Ascending aorta (tissue), 2 donors: ENCODE measurements at regions of chr11 and their contacts with region 1.

Region 1: GRCh38 chr11:113730887-113731726 is 25.0 kb upstream of the TMPRSS5 start:
- DNase-seq: peak in 1 of 2 donors; percentile 69
- H3K4me3 ChIP-seq: no peak overlapping the region
- H3K27ac ChIP-seq: no peak overlapping the region
- H3K4me1 ChIP-seq: no peaks in the 10 kb centered on the region
- H3K27me3 ChIP-seq: no peaks in the 10 kb centered on the region
- CTCF ChIP-seq: peak; percentile 30 to 75 (median 71)

Region 2: DNA sequence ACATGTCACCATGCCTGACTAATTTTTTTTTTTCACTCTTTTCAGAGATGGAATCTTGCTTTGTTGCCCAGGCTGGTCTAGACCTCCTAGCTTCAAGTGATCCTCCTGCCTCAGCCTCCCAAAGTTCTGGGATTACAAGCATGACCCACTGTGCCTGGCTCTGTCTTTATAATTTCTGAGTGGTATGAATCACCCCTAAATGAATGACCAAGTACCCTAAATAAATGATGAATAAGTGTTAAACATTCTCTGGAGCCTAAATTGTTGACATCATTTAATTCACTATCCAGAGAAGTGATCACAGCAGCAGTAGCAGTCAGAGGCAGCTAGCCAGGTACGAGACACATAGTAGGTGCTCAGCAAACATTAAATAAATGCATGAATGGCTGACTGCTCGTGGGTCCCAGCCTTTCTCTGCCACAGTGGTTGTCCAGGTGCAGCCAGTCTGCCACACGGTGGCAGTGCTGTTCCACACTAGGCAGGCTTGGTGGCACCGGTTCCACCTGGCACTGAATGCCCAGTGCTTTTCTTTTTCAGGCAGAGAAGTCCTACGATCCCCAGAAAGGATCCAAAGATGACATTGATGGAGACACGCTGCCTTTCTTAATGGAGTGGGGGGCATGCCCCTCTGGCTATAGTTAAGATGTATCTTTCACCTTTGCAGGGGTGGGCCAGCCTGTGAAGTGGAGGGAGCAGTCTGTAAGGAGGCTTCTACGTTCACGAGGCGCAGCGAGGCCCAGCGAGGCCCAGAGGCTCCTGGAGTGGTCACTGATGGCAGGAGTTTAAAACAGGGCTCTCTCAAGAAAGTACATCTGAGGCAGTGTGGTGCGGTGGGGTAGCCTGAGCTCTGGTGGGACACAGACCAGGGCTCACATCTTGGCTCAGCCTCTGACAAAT is 425.4 kb before region 1 on chr11:
- intact Hi-C with region 1: loop called (anchors 1 kb)
- DNase-seq: peak in 1 of 2 donors; percentile 81
- H3K4me3 ChIP-seq: no peak overlapping the region
- H3K27ac ChIP-seq: no peak overlapping the region
- H3K4me1 ChIP-seq: peaks cover 0 to 2% of the 10 kb centered on the region in 2 donors
- H3K27me3 ChIP-seq: no peaks in the 10 kb centered on the region
- CTCF ChIP-seq: peak; percentile 89 to 93 (median 90)

Region 3: GRCh38 chr11:113373306-113373705 is 357.8 kb before region 1 on chr11:
- intact Hi-C with region 1: loop called (anchors 5 kb)
- DNase-seq: no peak
- H3K4me3 ChIP-seq: no peak overlapping the region
- H3K27ac ChIP-seq: no peak overlapping the region
- H3K4me1 ChIP-seq: no peaks in the 10 kb centered on the region
- H3K27me3 ChIP-seq: no peaks in the 10 kb centered on the region
- CTCF ChIP-seq: no peak

Region 4: DNA sequence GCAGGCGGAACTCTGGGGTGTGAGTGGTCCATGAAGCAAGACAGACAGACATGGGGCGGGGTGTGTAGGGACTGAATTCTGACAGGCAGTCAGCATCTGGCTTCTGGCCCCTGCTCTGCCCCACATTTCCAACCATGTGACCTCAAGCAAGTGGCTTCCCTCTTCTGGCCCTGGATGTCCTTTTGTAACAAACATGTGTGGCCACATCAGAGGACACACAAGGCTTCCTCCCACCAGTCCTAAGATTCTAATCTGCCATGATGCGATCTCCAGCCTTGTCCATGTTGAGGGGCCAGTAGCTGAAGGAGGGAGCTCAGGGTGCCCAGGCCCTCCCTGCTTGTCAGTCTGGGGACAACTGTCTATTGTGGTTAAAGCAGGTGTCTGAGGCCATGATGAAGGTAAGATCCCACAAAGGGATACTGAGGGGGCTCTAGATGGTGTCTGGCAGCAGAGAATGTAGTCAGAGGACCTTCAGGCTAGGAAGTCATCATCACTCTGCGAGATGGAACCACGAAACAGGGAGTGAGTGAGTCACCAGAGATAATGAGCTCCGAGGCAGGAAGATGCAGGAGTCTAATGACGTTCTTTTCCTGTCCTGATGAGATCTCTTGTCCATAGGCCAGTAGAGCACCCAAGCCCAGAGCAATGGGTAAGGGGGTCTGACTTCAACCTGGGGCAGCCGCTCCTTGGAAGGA is 283.3 kb before region 1 on chr11:
- intact Hi-C with region 1: loop called (anchors 10 kb)
- DNase-seq: no peak
- H3K4me3 ChIP-seq: no peak overlapping the region
- H3K27ac ChIP-seq: no peak overlapping the region
- H3K4me1 ChIP-seq: no peaks in the 10 kb centered on the region
- H3K27me3 ChIP-seq: no peaks in the 10 kb centered on the region
- CTCF ChIP-seq: no peak

Region 5: GRCh38 chr11:113532697-113533424 is 198.2 kb before region 1 on chr11:
- intact Hi-C with region 1: loop called (anchors 1 kb)
- DNase-seq: peak in 1 of 2 donors; percentile 81
- H3K4me3 ChIP-seq: no peak overlapping the region
- H3K27ac ChIP-seq: no peak overlapping the region
- H3K4me1 ChIP-seq: peaks cover 0 to 2% of the 10 kb centered on the region in 2 donors
- H3K27me3 ChIP-seq: no peaks in the 10 kb centered on the region
- CTCF ChIP-seq: peak; percentile 55 to 86 (median 81)

Region 6: DNA sequence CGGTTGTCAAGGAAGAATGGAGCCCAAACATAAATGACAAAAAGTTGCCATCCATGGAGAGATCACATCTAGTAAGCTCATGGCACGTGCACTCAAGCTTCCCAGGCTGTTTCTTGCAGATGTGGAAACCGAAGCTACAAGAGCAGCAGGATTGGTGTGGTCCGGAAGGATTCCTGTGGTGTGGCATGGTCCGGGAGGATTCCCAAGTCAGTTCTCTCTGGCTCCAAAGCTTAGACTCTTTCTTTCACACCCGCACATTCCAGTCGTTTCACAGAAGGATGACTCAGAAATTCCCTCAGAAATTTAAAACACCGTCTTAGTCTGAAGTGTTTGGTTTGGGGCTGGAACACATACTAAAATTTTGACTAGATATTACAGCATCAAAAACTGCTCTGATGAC is 177.9 kb before region 1 on chr11:
- intact Hi-C with region 1: loop called (anchors 5 kb)
- DNase-seq: peak in 1 of 2 donors; percentile 69
- H3K4me3 ChIP-seq: no peak overlapping the region
- H3K27ac ChIP-seq: no peak overlapping the region
- H3K4me1 ChIP-seq: peaks cover 0 to 10% of the 10 kb centered on the region in 2 donors
- H3K27me3 ChIP-seq: no peaks in the 10 kb centered on the region
- CTCF ChIP-seq: no peak